ENCODE measurements at regions of chr1 and their contacts with region 1.

Region 1: GRCh38 chr1:151254217-151255213 is at the start of gene PSMD4:
- DNase-seq: peak; percentile 77
- ATAC-seq: peak; percentile 87
- H3K4me3 Mint-ChIP-seq: peak within 1 kb of the TSS; percentile 97
- H3K27ac Mint-ChIP-seq: peak within 1 kb of the TSS; percentile 93
- H3K4me1 Mint-ChIP-seq: peaks cover 37% of the 10 kb centered on the region
- H3K27me3 Mint-ChIP-seq: no peaks in the 10 kb centered on the region
- CTCF ChIP-seq: no peak
- total RNA-seq, gene PSMD4: 189 and 201 TPM in 2 replicates

Region 2: GRCh38 chr1:150596095-150596892 is 658.2 kb before region 1 on chr1:
- CTCF ChIA-PET with region 1: no interaction called
- POLR2A ChIA-PET with region 1: no interaction called
- intact Hi-C with region 1: no loop called
- DNase-seq: no peak
- ATAC-seq: no peak
- H3K4me3 Mint-ChIP-seq: no peak overlapping the region
- H3K27ac Mint-ChIP-seq: no peak overlapping the region
- H3K4me1 Mint-ChIP-seq: peaks cover 6% of the 10 kb centered on the region
- H3K27me3 Mint-ChIP-seq: no peaks in the 10 kb centered on the region
- CTCF ChIP-seq: no peak

Region 3: DNA sequence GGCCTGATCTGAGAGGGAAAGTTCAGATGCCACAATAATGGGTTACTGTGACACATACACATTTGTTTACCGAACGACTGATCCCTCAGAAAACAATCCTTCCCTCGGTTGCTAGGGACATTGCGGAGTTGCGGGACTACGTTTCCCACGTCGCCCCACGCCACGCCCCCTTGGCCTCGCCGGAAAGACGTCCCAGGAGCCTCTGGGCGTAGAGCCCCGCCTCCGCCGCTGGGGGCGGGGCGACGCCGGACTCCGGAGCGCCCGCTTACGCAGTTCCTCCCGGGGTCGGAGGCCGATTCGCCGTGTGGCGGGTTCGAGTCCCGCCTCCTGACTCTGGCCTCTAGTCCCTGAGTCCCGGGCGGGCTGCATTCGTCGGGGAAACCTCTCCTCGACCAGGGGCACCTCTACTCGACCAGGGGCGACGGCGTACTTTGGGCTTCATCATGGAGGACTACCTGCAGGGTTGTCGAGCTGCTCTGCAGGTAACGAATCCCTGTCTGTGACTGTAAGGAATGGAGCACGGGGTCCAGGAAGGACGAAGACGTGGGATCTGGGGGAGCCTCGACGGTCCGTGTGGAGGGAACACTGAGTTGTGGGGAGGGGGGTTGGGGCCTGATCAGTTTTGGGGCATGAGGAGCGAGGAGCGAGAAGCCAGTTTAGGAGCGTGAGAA is 246.2 kb before region 1 on chr1 and contains the start of gene PRUNE1:
- CTCF ChIA-PET with region 1: no interaction called
- POLR2A ChIA-PET with region 1: no interaction called
- intact Hi-C with region 1: loop called (anchors 10 kb)
- DNase-seq: peak; percentile 91
- ATAC-seq: peak; percentile 94
- H3K4me3 Mint-ChIP-seq: peak within 1 kb of the TSS; percentile 98
- H3K27ac Mint-ChIP-seq: peak within 1 kb of the TSS; percentile 93
- H3K4me1 Mint-ChIP-seq: peaks cover 66% of the 10 kb centered on the region
- H3K27me3 Mint-ChIP-seq: no peaks in the 10 kb centered on the region
- CTCF ChIP-seq: no peak
- total RNA-seq, gene PRUNE1: 12.9 and 14.2 TPM in 2 replicates

Region 4: DNA sequence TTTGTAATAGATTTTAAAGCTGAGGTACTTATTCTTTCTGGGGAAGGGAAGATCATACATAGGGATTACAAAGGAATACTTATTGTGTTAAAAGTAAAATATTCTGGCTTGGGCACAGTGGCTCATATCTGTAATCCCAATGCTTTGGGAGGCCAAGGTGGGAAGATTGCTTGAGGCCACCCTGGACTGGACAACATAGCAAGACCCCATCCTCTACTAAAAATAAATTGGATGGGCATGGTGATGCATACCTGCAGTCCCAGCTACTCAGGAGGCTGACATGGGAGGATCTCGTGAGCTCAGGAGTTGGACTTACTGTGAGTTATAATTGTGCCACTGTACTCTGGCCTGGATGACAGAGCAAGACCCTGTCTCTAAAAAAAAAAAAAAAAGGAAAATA is 156.4 kb before region 1 on chr1:
- CTCF ChIA-PET with region 1: interaction called, 30 read pairs
- POLR2A ChIA-PET with region 1: interaction called, 8 read pairs
- intact Hi-C with region 1: loop called (anchors 1 kb)
- DNase-seq: no peak
- ATAC-seq: no peak
- H3K4me3 Mint-ChIP-seq: no peak overlapping the region
- H3K27ac Mint-ChIP-seq: no peak overlapping the region
- H3K4me1 Mint-ChIP-seq: no peaks in the 10 kb centered on the region
- H3K27me3 Mint-ChIP-seq: no peaks in the 10 kb centered on the region
- CTCF ChIP-seq: no peak

Region 5: GRCh38 chr1:151198255-151199127 is 56.0 kb before region 1 on chr1 and contains the start of gene PIP5K1A:
- CTCF ChIA-PET with region 1: interaction called, 10 read pairs
- POLR2A ChIA-PET with region 1: interaction called, 9 read pairs
- intact Hi-C with region 1: loop called (anchors 1 kb)
- DNase-seq: peak; percentile 94
- ATAC-seq: peak; percentile 93
- H3K4me3 Mint-ChIP-seq: peak within 1 kb of the TSS; percentile 99
- H3K27ac Mint-ChIP-seq: peak within 1 kb of the TSS; percentile 98
- H3K4me1 Mint-ChIP-seq: peaks cover 47% of the 10 kb centered on the region
- H3K27me3 Mint-ChIP-seq: no peaks in the 10 kb centered on the region
- CTCF ChIP-seq: no peak
- total RNA-seq, gene PIP5K1A: 63.2 and 77.7 TPM in 2 replicates

Region 6: GRCh38 chr1:151281969-151282882 is 27.7 kb after region 1 on chr1 and contains the start of gene ZNF687:
- CTCF ChIA-PET with region 1: interaction called, 9 read pairs
- POLR2A ChIA-PET with region 1: interaction called, 36 read pairs
- intact Hi-C with region 1: loop called (anchors 1 kb)
- DNase-seq: peak; percentile 96
- ATAC-seq: peak; percentile 88
- H3K4me3 Mint-ChIP-seq: peak within 1 kb of the TSS; percentile 99
- H3K27ac Mint-ChIP-seq: peak within 1 kb of the TSS; percentile 99
- H3K4me1 Mint-ChIP-seq: peaks cover 54% of the 10 kb centered on the region
- H3K27me3 Mint-ChIP-seq: no peaks in the 10 kb centered on the region
- CTCF ChIP-seq: no peak
- total RNA-seq, gene ZNF687: 38.8 and 40.3 TPM in 2 replicates

Region 7: GRCh38 chr1:151346769-151347522 is 92.4 kb after region 1 on chr1 and contains the start of gene RFX5:
- CTCF ChIA-PET with region 1: no interaction called
- POLR2A ChIA-PET with region 1: interaction called, 3 read pairs
- intact Hi-C with region 1: loop called (anchors 10 kb)
- DNase-seq: peak; percentile 77
- ATAC-seq: peak; percentile 91
- H3K4me3 Mint-ChIP-seq: peak within 1 kb of the TSS; percentile 98
- H3K27ac Mint-ChIP-seq: peak within 1 kb of the TSS; percentile 100
- H3K4me1 Mint-ChIP-seq: peaks cover 55% of the 10 kb centered on the region
- H3K27me3 Mint-ChIP-seq: no peaks in the 10 kb centered on the region
- CTCF ChIP-seq: no peak
- total RNA-seq, gene RFX5: 222 and 262 TPM in 2 replicates

Region 8: GRCh38 chr1:151372061-151372934 is 117.8 kb after region 1 on chr1 and contains the start of gene SELENBP1:
- CTCF ChIA-PET with region 1: no interaction called
- POLR2A ChIA-PET with region 1: no interaction called
- intact Hi-C with region 1: no loop called
- DNase-seq: no peak
- ATAC-seq: no peak
- H3K4me3 Mint-ChIP-seq: no peak within 1 kb of the TSS
- H3K27ac Mint-ChIP-seq: peak within 1 kb of the TSS; percentile 6
- H3K4me1 Mint-ChIP-seq: no peaks in the 10 kb centered on the region
- H3K27me3 Mint-ChIP-seq: no peaks in the 10 kb centered on the region
- CTCF ChIP-seq: no peak
- total RNA-seq, gene SELENBP1: not detected in 2 replicates